ENCODE measurements at regions of chr3 and their contacts with region 1.

Region 1: DNA sequence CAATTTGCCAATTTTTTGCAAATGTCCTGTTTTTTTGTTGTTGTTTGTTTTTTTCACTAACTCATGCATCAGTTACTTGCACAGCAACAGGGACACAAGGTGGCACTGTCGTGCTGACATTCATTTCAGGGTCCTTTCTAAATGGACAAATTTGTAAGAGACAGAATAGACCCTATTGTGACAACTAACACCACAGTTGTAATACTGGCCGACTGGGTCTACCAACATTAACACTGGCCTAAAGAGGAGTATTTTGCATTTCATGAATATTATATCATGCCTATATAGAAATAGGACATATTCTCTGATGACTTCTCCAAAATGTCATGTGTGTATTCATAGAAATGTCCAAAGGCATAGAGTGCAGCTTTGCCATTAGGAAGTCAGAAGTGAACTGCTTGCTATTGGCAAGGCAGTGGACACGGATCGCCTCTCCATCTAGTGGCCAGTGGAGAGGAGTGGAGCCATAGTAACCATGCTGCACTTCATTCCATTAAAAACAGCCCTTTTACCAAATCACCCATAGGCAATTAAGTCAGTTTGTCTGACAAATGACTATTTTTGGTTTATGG is 54.8 kb downstream of the ZBTB20 start:
- DNase-seq: peak; percentile 50
- H3K4me3 Mint-ChIP-seq: no peak overlapping the region
- H3K27ac Mint-ChIP-seq: no peak overlapping the region
- H3K4me1 Mint-ChIP-seq: no peaks in the 10 kb centered on the region
- H3K27me3 Mint-ChIP-seq: no peaks in the 10 kb centered on the region
- CTCF ChIP-seq: peak; percentile 30

Region 2: DNA sequence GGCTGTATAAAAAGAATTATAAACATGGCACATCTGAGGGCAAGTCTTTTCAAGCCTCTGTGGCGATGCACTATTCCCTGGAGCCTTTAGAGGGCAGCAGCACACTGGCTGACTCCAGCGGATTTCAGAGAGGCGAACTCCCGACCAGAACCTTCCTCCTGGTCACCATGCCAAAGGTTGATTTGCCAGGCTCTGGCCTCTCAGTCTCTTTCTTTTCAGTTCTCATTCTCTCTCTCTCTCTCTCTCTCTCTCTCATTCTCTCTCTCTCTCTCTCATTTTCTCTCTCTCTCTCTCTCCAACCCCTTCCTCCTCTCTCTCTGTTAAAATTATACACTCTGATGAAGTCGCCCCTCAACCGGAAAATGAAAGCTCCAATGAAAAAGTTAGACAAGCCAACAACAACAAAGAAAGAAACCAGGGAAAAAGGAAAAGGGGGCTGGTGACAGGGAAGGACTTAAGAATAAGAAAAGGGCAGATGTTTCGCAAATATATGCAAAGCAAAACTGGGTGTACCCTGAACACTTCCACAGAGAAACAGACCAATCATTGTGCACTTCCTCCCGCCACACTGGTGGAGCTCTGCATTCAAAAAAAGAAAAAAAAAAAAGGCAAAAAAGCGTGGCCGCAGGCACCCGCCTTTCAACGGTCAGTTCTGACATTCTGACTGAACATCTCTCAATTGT is 708.3 kb before region 1 on chr3:
- CTCF ChIA-PET with region 1: no interaction called
- intact Hi-C with region 1: loop called (anchors 5 kb)
- DNase-seq: peak; percentile 75
- H3K4me3 Mint-ChIP-seq: peak overlapping the region; percentile 16
- H3K27ac Mint-ChIP-seq: peak overlapping the region; percentile 57
- H3K4me1 Mint-ChIP-seq: no peaks in the 10 kb centered on the region
- H3K27me3 Mint-ChIP-seq: no peaks in the 10 kb centered on the region
- CTCF ChIP-seq: peak; percentile 55

Region 3: GRCh38 chr3:114550165-114550564 is 542.1 kb before region 1 on chr3:
- CTCF ChIA-PET with region 1: no interaction called
- intact Hi-C with region 1: no loop called
- DNase-seq: no peak
- H3K4me3 Mint-ChIP-seq: no peak overlapping the region
- H3K27ac Mint-ChIP-seq: peak overlapping the region; percentile 71
- H3K4me1 Mint-ChIP-seq: peaks cover 15% of the 10 kb centered on the region
- H3K27me3 Mint-ChIP-seq: no peaks in the 10 kb centered on the region
- CTCF ChIP-seq: no peak

Region 4: DNA sequence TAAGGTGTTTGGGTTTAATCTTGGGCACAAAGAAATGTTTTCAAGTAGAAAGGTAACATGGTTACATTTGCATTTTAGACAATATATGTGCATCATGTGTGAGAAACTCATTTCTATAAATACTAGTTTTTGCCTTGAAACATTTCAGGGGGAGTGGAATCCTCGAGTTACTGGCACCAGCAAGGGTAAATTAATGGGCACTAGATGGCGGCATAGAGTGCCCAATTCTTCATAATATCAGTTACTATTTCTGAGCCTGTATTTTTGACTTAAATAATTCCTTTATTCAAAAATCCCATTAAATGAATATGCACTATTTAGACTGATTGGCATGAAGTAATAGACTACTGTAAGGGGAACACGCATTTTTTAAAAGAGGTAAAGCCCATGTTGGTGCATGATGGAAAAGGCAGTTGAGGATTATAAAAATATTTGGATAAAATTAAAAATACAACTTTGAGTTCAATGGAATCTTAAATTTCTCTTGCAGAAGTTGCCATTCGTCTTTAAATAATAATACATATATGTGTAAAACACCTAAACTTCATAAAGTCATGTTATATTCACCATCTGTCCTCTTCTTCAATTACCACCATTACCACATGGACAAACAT is 51.5 kb before region 1 on chr3:
- CTCF ChIA-PET with region 1: no interaction called
- intact Hi-C with region 1: loop called (anchors 1 kb)
- DNase-seq: peak; percentile 42
- H3K4me3 Mint-ChIP-seq: no peak overlapping the region
- H3K27ac Mint-ChIP-seq: no peak overlapping the region
- H3K4me1 Mint-ChIP-seq: no peaks in the 10 kb centered on the region
- H3K27me3 Mint-ChIP-seq: no peaks in the 10 kb centered on the region
- CTCF ChIP-seq: no peak

Region 5: DNA sequence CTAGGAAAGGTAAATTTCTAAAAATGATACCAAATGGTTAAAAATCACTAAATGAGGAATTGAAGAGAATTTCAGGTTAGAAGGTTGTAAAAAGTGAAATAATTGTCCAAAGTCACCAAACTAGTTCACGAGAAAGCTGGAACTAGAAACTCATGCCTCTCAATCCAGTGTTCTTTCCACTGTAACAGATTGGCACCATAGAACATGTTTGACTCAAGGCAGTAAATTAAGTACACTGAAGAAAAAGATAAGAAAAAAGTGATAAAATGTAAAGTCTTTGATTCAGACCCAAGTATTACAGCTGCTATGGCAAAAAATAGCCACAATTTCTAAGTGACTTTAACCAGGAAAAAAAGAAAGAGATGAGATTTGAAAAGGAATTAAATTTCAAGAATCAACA is 28.3 kb after region 1 on chr3:
- CTCF ChIA-PET with region 1: no interaction called
- intact Hi-C with region 1: no loop called
- DNase-seq: no peak
- H3K4me3 Mint-ChIP-seq: no peak overlapping the region
- H3K27ac Mint-ChIP-seq: no peak overlapping the region
- H3K4me1 Mint-ChIP-seq: no peaks in the 10 kb centered on the region
- H3K27me3 Mint-ChIP-seq: no peaks in the 10 kb centered on the region
- CTCF ChIP-seq: no peak

Region 6: DNA sequence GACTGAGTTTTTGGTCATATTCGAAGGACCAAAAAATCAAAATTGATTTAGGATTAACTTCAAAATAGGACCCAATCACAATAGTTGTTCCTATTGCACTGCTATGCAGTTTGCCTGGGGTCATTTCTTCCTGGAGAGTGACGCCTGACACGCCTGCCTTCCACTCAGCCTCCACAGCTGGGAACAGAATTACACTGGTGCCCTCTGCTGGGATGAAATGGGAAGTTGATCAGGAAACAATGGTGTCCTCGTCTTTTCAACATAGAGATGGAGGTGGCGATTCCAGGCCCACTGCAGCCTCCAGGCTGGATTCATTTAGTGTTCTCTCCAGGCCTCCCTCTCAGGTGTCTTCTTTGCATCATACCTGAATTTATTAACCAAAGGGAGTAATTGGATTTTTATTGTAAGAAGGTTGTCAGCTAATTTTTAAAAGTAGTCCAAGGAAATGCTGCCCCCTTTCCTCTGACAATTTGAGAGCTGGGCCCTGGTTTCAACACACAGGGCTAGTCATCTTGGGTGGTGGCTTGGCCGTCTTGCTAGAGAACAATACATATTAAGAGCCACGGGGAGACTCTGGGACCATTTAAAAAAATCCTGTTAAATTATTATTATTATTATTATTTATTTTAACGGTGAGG is 600.7 kb after region 1 on chr3:
- CTCF ChIA-PET with region 1: no interaction called
- intact Hi-C with region 1: loop called (anchors 2 kb)
- DNase-seq: peak; percentile 82
- H3K4me3 Mint-ChIP-seq: no peak overlapping the region
- H3K27ac Mint-ChIP-seq: no peak overlapping the region
- H3K4me1 Mint-ChIP-seq: peaks cover 12% of the 10 kb centered on the region
- H3K27me3 Mint-ChIP-seq: no peaks in the 10 kb centered on the region
- CTCF ChIP-seq: peak; percentile 63

Measured in Calu3 (cell line).